Common myeloid progenitor, CD34-positive (primary cell): ENCODE measurements at regions of chr2 and their contacts with region 1.

Region 1: DNA sequence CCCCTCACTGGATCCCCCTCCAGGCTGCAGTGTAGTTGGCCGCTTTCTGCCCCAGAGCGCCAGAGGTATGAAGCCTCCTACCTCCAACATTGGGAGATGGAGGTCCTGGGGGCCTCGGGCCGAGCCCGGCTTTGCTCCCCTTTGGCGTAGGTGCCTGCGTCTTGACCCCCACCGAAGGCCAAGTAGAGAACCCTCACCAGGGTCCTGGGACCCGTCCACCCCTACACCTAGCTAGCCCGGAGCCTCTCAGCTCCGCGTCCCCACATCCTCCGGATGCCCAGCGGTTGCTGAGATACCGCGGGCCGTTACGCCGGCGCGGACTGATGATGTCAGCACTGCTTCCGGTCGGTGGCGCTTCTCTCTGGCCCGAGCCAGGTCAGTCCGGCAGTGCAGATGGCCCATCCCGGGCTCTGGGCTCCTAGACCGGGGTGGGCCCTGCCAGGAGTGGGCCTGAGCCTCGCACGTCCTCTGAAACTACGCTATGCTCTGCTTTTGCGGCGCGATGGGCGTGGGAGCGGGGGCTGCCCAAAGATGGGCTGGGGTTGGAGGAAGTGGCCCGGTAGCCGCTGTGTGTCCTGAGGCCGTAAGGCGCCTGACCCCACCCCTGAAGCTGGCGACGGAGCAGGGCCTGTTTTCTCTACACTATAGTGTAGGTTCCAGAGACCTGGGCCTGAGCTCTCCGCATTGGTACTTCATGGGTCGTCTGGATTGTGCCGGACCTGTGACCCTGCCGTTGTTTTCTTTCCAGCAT is at the starts of genes GLB1L and STK16:
- DNase-seq: peak; percentile 90 to 93 (median 93)
- H3K4me3 ChIP-seq: peak within 1 kb of the TSS; percentile 50 to 96 (median 91)
- H3K27ac ChIP-seq: peak within 1 kb of the TSS; percentile 80 to 94
- H3K4me1 ChIP-seq: peaks cover 48 to 66% (median 62%) of the 10 kb centered on the region in 4 experiments
- H3K27me3 ChIP-seq: no peaks in the 10 kb centered on the region

Region 2: DNA sequence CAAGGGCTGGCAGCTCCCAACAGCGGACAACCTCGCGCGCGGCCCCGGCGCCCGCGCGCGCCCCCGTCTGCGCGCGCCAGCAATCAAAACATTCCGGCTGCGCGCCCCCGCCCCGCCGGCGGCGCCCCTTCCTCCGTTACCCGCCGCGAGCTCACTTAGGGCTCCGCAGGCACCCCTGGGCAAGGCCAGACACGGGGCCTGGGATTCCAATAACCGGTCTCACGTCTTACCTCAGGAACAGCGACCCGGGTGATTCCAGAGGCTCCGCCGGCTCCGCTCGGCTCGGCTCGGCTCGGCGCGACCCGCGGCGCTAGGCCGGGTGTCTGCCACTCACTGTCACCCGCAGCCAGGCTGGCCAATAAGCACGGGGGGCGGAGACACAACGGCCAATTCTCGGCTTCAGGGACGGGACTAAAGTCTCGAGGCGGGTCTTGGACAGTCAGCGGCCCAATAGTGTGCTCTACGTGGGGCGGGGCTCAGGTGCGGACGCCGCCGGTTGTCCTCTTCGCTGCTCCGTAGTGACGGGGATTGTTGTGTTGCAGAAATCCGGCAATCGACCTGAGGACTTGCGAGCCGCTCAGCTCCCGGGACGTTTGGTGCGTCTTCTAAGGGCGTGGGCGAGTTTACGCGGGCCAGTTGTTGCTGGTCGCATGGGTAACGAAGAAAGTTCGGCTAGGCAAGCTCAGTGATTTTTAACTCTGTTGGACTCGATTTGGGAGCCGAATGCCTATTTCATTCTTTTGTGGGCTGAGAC is 15.8 kb before region 1 on chr2 and contains the starts of genes ANKZF1 and ATG9A:
- CTCF ChIA-PET with region 1: interaction called, 24 read pairs
- POLR2A ChIA-PET with region 1: interaction called, 12 read pairs
- DNase-seq: peak; percentile 97 to 99 (median 99)
- H3K4me3 ChIP-seq: peak within 1 kb of the TSS; percentile 60 to 98 (median 91)
- H3K27ac ChIP-seq: peak within 1 kb of the TSS; percentile 85 to 90
- H3K4me1 ChIP-seq: peaks cover 10 to 41% (median 36%) of the 10 kb centered on the region in 4 experiments
- H3K27me3 ChIP-seq: no peaks in the 10 kb centered on the region

Region 3: GRCh38 chr2:219278655-219279516 is 33.6 kb after region 1 on chr2 and contains the start of gene DNAJB2:
- CTCF ChIA-PET with region 1: interaction called, 14 read pairs
- POLR2A ChIA-PET with region 1: no interaction called
- DNase-seq: peak; percentile 98 to 99 (median 99)
- H3K4me3 ChIP-seq: peak within 1 kb of the TSS; percentile 22 to 77 (median 65)
- H3K27ac ChIP-seq: peak within 1 kb of the TSS; percentile 68 to 84
- H3K4me1 ChIP-seq: peaks cover 8 to 32% (median 28%) of the 10 kb centered on the region in 4 experiments
- H3K27me3 ChIP-seq: peaks cover 0 to 3% (median 0%) of the 10 kb centered on the region in 5 experiments